Heart left ventricle (tissue), 16 donors: ENCODE measurements at regions of chr4 and their contacts with region 1.

Region 1: DNA sequence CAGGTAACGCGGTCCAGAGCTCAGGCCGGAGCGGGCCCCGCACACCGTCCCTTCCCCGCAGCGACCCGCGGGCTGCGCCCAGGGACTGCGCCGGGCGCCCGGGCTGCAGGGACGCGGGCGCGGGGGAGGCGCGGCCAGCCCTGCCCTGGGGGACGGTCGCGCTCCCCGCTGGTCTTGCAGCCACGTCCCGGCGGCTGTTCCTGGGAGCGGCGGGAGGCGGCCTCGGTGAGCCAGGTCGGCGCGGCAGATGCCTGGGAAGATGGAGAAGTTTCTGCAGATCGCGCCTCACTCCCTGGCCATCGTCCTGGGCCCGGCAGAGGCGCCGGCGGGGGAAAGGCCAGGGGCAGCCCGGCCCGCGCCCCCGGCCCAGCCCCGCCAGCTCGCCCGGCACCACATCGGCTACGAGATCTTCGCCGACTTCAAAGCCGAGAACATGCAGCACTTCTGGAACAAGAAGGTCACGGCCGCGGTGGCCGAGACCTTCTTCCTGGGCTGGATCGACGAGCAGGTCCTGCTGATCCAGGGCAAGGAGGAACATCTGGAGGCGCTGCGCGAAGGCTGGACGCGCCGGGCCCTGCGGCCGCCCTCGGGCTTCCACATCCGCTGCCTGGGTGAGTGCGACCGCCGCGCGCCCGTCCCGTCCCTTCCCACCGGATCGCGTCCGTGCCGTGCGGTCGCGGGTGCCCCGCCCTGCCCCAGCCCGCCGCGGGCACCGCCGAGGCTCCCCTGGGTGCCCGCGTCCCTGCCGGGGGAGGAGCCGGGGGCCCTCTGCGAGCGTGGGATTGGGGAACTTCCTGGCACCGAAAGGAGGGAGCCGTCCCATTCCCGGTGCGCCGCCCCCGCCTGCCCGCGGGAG is 107.4 kb upstream of the STOX2 start:
- DNase-seq: peak in 4 of 5 donors; percentile 29 to 70 (median 50)
- ATAC-seq: peak in 3 of 4 donors; percentile 59 to 74 (median 74)
- H3K4me3 ChIP-seq: peak overlapping the region; percentile 39 to 79 (median 66)
- H3K27ac ChIP-seq: peak overlapping the region; percentile 20 to 87 (median 70)
- H3K4me1 ChIP-seq: peaks cover 0 to 15% (median 0%) of the 10 kb centered on the region in 12 donors
- H3K27me3 ChIP-seq: peaks cover 0 to 44% (median 20%) of the 10 kb centered on the region in 9 donors
- CTCF ChIP-seq: no peak
- POLR2A ChIP-seq: peak in 1 of 2 donors; percentile 19

Region 2: GRCh38 chr4:183722731-183723560 is 74.7 kb before region 1 on chr4:
- intact Hi-C with region 1: loop called in 2 of 10 experiments (anchors 5 to 10 kb)
- DNase-seq: peak; percentile 61 to 86 (median 72)
- ATAC-seq: peak; percentile 24 to 78 (median 75)
- H3K4me3 ChIP-seq: peak overlapping the region; percentile 32 to 70 (median 58)
- H3K27ac ChIP-seq: peak overlapping the region in 11 of 12 donors; percentile 3 to 74 (median 44)
- H3K4me1 ChIP-seq: peaks cover 0 to 18% (median 1%) of the 10 kb centered on the region in 12 donors
- H3K27me3 ChIP-seq: no peaks in the 10 kb centered on the region
- CTCF ChIP-seq: peak in 4 of 12 donors; percentile 7 to 31 (median 13)
- POLR2A ChIP-seq: no peak

Region 3: GRCh38 chr4:183765251-183765911 is 32.3 kb before region 1 on chr4:
- intact Hi-C with region 1: loop called in 3 of 10 experiments (anchors 2 to 5 kb)
- DNase-seq: peak in 4 of 5 donors; percentile 59 to 74 (median 64)
- ATAC-seq: peak in 3 of 4 donors; percentile 53 to 90 (median 74)
- H3K4me3 ChIP-seq: peak overlapping the region in 11 of 12 donors; percentile 1 to 57 (median 42)
- H3K27ac ChIP-seq: peak overlapping the region; percentile 65 to 88 (median 82)
- H3K4me1 ChIP-seq: peaks cover 0 to 24% (median 7%) of the 10 kb centered on the region in 12 donors
- H3K27me3 ChIP-seq: no peaks in the 10 kb centered on the region
- CTCF ChIP-seq: no peak
- POLR2A ChIP-seq: no peak

Region 4: GRCh38 chr4:183830438-183830985 is 32.8 kb after region 1 on chr4:
- intact Hi-C with region 1: loop called in 2 of 10 experiments (anchors 5 kb)
- DNase-seq: no peak
- ATAC-seq: peak in 3 of 4 donors; percentile 21 to 38 (median 23)
- H3K4me3 ChIP-seq: no peak overlapping the region
- H3K27ac ChIP-seq: peak overlapping the region in 10 of 12 donors; percentile 8 to 69 (median 44)
- H3K4me1 ChIP-seq: peaks cover 0 to 55% (median 23%) of the 10 kb centered on the region in 12 donors
- H3K27me3 ChIP-seq: no peaks in the 10 kb centered on the region
- CTCF ChIP-seq: no peak
- POLR2A ChIP-seq: no peak

Region 5: DNA sequence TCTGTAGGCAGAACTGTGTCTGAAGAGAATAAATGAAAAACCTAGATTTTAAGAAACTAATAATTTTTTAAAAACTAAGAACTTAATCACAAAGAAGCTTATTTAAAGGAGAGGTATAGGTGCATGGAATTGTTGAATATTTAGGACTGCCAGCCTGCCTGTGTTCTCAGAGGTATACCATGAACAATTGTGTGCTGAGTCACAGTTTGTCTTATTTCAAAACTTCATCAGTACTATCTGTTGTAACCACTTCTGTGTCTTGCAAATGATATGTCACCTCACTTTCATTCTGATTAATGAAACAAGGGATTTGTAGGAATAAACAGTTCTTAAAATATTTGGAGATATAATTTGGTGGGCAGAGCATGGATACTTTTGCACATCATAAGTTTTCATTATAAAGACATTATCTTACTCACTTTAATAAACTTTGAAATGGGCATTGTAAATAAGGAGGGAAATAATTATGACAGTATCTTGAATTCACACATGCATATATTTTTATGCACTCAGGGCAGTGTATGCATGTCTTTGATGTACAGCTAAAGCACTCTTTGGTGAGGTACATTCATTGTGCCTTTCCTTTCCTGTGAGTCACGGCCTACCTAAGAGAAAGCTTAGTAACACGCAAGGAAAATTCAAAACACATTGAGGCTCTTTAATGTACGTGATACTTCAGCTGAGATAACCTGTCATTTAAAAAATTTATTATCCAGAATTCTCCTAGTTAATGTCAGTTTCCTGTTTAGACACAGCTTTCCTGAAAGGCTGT is 139.1 kb after region 1 on chr4:
- intact Hi-C with region 1: no loop called
- DNase-seq: no peak
- ATAC-seq: no peak
- H3K4me3 ChIP-seq: no peak overlapping the region
- H3K27ac ChIP-seq: no peak overlapping the region
- H3K4me1 ChIP-seq: peaks cover 0 to 29% (median 14%) of the 10 kb centered on the region in 12 donors
- H3K27me3 ChIP-seq: no peaks in the 10 kb centered on the region
- CTCF ChIP-seq: no peak
- POLR2A ChIP-seq: no peak